Activated T-helper 2 cell treated with anti-CD3 and anti-CD28 coated beads, Interferon-gamma antibody, Interleukin-2, Interleukin-4, amounts not matched to agents 10 μg/mL and 5 μg/mL and 100 μg/mL, durations not matched to agents 14 hours and 24 hours and 36 hours (primary cell): ENCODE measurements at regions of chr7 and their contacts with region 1.

Region 1: DNA sequence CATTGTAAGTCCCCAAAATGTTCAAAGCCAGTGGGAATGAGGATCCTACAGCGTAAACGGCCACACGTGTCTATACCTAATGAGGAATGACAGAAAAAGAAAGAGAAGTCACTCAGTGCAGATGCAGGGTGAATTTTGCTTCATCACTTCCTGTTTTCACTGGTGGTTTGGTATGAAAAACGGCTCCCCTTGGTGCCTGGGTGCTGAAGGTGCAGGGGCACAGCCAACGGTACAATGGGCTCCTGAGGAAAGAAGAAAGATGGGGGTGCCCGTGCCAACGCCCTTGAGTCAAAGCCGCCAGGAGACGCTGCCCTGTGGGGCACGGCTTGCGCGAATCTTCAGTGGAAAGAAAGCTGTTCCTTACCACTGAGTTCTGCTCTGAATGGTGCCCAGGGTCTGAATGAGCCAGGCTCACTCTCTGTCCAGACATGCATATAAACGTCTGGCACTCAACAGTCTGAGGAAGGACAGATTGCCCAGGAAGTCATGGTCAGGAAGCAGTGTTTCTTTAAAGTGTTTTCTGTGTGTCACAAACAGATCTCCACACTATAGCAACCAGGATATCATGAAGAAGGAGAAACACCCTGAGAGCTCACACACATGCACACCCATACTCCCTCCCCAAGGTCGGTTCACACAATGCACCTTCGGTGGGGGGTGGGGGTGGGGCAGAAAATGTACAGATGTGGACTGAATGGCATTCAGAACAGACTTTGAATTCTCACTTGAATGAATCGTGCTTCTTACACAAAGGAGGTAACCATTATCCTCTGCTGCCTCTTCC is 105.8 kb downstream of the ELMO1 start:
- DNase-seq: peak; percentile 63
- H3K4me3 Mint-ChIP-seq: peak overlapping the region; percentile 98
- H3K27ac Mint-ChIP-seq: peak overlapping the region; percentile 99
- H3K4me1 Mint-ChIP-seq: peaks cover 48% of the 10 kb centered on the region
- H3K27me3 Mint-ChIP-seq: no peaks in the 10 kb centered on the region

Region 2: DNA sequence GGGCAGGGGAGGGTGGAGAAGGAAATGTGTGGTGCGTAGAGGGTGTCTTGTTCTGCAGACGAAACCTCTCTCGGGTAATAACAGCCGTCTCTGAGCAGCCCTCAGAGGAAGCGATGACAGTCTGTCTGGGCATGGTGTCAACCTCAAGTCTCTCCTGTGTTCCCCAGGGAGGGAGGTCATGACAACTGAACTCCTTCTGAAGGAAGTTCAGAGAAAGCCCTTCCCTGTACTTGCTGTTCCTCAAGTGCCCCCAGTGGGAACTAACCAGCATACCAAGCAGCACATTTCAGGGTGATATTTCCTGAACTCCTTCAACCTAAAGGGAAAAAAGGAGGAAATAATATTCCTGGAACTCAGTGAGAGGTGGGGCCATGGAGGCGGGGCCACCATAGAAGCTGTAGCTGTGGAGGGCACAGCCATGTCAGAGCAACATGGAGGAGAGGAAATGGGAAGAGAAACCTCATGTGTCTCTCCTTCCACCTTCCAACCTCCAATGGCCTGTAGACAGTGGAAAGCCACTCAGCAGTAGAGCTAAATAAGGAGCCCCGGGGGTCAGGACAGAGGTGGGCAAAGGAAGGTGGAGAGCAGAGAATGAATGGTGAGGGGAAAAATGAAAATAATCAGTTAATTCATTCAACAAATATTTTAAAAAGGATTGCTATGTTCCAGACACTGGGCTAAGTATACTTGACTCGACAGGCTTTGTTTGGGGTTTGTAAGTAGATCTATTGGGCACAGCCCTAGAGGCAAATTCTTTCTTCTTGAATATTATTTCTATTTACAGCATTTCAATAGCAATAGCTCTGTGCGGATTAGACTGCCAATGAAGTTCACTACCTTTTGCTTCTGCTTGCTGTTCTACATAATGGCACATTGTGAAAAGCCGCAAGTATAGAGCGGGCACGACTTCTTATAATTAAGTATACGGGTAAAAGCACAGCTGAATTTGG is 557.6 kb before region 1 on chr7:
- intact Hi-C with region 1: loop called (anchors 10 kb)
- DNase-seq: peak; percentile 48
- H3K4me3 Mint-ChIP-seq: no peak overlapping the region
- H3K27ac Mint-ChIP-seq: peak overlapping the region; percentile 78
- H3K4me1 Mint-ChIP-seq: peaks cover 69% of the 10 kb centered on the region
- H3K27me3 Mint-ChIP-seq: no peaks in the 10 kb centered on the region

Region 3: GRCh38 chr7:37065779-37066271 is 277.1 kb before region 1 on chr7:
- intact Hi-C with region 1: loop called (anchors 10 kb)
- DNase-seq: no peak
- H3K4me3 Mint-ChIP-seq: no peak overlapping the region
- H3K27ac Mint-ChIP-seq: peak overlapping the region; percentile 86
- H3K4me1 Mint-ChIP-seq: peaks cover 50% of the 10 kb centered on the region
- H3K27me3 Mint-ChIP-seq: no peaks in the 10 kb centered on the region

Region 4: GRCh38 chr7:37284805-37285231 is 58.1 kb before region 1 on chr7:
- intact Hi-C with region 1: loop called (anchors 1 kb)
- DNase-seq: no peak
- H3K4me3 Mint-ChIP-seq: no peak overlapping the region
- H3K27ac Mint-ChIP-seq: no peak overlapping the region
- H3K4me1 Mint-ChIP-seq: peaks cover 41% of the 10 kb centered on the region
- H3K27me3 Mint-ChIP-seq: no peaks in the 10 kb centered on the region

Region 5: DNA sequence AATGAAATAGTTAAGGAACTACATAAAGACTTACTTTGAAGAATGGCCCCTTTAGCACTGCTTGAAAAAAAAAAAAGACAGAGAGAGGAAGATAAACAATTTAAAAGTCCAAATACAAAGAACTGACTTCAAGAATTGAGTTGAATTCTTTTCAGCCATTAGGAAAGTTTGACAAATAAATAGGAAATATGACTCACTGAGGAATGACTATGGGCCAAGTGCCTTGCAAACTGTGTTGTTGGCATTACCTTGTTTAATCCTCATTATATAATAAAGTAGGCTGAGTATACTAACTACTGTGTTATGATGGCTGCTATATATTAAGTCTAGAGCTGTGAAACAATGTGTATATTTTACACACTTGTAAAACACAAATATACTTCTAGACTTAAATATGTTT is 45.3 kb before region 1 on chr7:
- intact Hi-C with region 1: no loop called
- DNase-seq: no peak
- H3K4me3 Mint-ChIP-seq: no peak overlapping the region
- H3K27ac Mint-ChIP-seq: no peak overlapping the region
- H3K4me1 Mint-ChIP-seq: peaks cover 11% of the 10 kb centered on the region
- H3K27me3 Mint-ChIP-seq: no peaks in the 10 kb centered on the region

Region 6: GRCh38 chr7:37327288-37327687 is 15.6 kb before region 1 on chr7:
- intact Hi-C with region 1: loop called (anchors 2 kb)
- DNase-seq: no peak
- H3K4me3 Mint-ChIP-seq: no peak overlapping the region
- H3K27ac Mint-ChIP-seq: peak overlapping the region; percentile 6
- H3K4me1 Mint-ChIP-seq: peaks cover 48% of the 10 kb centered on the region
- H3K27me3 Mint-ChIP-seq: no peaks in the 10 kb centered on the region

Region 7: DNA sequence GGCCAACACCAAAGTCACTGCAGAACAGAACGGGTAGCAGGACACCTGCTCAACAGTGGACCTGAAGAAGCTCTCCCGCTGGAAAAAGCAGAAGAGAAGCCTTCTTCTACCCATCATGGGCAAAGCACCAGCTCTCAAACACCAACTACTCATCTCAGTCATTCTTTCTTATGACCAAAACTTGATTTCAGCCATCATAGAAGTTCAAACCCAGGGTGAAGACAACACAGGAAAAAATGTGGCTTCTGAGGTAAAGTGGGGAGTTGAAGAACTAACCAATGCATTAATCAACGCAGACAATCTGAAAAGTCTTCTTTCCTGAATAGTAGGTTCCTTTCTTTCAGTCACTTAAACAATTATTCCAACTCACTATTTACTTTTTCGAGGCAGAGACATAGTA is 22.5 kb after region 1 on chr7:
- intact Hi-C with region 1: loop called (anchors 2 kb)
- DNase-seq: no peak
- H3K4me3 Mint-ChIP-seq: no peak overlapping the region
- H3K27ac Mint-ChIP-seq: no peak overlapping the region
- H3K4me1 Mint-ChIP-seq: peaks cover 55% of the 10 kb centered on the region
- H3K27me3 Mint-ChIP-seq: peaks cover 25% of the 10 kb centered on the region

Region 8: GRCh38 chr7:37391791-37392672 is 49.2 kb after region 1 on chr7:
- intact Hi-C with region 1: no loop called
- DNase-seq: no peak
- H3K4me3 Mint-ChIP-seq: no peak overlapping the region
- H3K27ac Mint-ChIP-seq: no peak overlapping the region
- H3K4me1 Mint-ChIP-seq: peaks cover 7% of the 10 kb centered on the region
- H3K27me3 Mint-ChIP-seq: no peaks in the 10 kb centered on the region

Region 9: GRCh38 chr7:37467002-37467401 is 124.1 kb after region 1 on chr7:
- intact Hi-C with region 1: no loop called
- DNase-seq: no peak
- H3K4me3 Mint-ChIP-seq: no peak overlapping the region
- H3K27ac Mint-ChIP-seq: no peak overlapping the region
- H3K4me1 Mint-ChIP-seq: no peaks in the 10 kb centered on the region
- H3K27me3 Mint-ChIP-seq: peaks cover 7% of the 10 kb centered on the region

Region 10: GRCh38 chr7:37882086-37882485 is 539.2 kb after region 1 on chr7:
- intact Hi-C with region 1: no loop called
- DNase-seq: no peak
- H3K4me3 Mint-ChIP-seq: no peak overlapping the region
- H3K27ac Mint-ChIP-seq: no peak overlapping the region
- H3K4me1 Mint-ChIP-seq: no peaks in the 10 kb centered on the region
- H3K27me3 Mint-ChIP-seq: peaks cover 1% of the 10 kb centered on the region